GM10248 (cell line): ENCODE measurements at regions of chr2 and their contacts with region 1.

Region 1: GRCh38 chr2:105576440-105577252 is 168.1 kb upstream of the NCK2 start:
- DNase-seq: peak; percentile 59
- CTCF ChIP-seq: peak; percentile 61

Region 2: GRCh38 chr2:105682401-105682800 is 105.8 kb after region 1 on chr2:
- CTCF ChIA-PET with region 1: no interaction called
- POLR2A ChIA-PET with region 1: no interaction called
- DNase-seq: no peak
- CTCF ChIP-seq: no peak

Region 3: DNA sequence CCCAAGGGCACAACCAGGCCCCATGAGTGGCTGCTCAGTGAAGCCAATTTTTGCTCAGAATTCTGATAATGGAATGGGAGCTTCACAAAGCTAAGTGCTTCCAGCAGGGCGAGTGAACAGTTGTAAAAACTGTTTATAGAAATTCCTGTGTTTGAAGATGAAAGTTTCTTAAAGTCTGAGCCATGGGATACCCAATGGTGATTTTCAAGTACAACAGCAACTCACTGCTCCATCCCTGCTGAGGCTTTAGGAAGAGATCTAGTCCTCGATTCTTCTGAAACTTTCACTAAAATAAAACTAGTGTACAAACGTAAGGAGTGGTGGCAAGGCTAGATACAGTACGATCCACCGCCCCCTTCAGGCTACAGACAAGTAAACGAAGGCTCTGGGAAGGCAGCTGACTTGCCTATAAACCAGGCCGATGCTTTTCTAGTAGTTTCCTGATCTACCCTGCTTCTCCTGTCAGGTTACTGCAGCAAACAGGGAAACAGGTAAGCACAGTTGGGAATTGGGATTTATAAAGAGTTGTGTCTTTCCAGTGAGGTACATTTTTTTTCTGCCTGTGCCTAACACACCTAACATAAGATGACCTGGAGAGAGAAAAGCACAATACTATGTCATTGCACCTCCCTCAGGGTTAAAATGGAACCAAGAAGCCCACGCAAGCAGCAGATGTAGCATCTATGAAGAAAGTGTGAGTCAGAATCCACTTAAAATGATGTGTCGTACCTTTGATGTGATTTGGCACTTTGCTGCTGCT is 508.7 kb after region 1 on chr2:
- CTCF ChIA-PET with region 1: interaction called, 37 read pairs
- POLR2A ChIA-PET with region 1: no interaction called
- DNase-seq: no peak
- CTCF ChIP-seq: peak; percentile 39